GM12878 (cell line): ENCODE measurements at regions of chr17 and their contacts with region 1.

Region 1: GRCh38 chr17:62321451-62321850 is 58.9 kb upstream of the EFCAB3 start:
- DNase-seq: no peak
- ATAC-seq: no peak
- H3K4me3 ChIP-seq: no peak overlapping the region
- H3K27ac ChIP-seq: no peak overlapping the region
- H3K4me1 ChIP-seq: no peaks in the 10 kb centered on the region
- H3K27me3 ChIP-seq: no peaks in the 10 kb centered on the region
- CTCF ChIP-seq: no peak
- EP300 ChIP-seq: no peak
- POLR2A ChIP-seq: no peak
- RAD21 ChIP-seq: no peak

Region 2: GRCh38 chr17:62300697-62301096 is 20.8 kb before region 1 on chr17:
- CTCF ChIA-PET with region 1: no interaction called
- POLR2A ChIA-PET with region 1: no interaction called
- RAD21 ChIA-PET with region 1: no interaction called
- SMC1A ChIA-PET with region 1: no interaction called
- in situ Hi-C with region 1: no loop called
- intact Hi-C with region 1: no loop called
- DNase-seq: no peak
- ATAC-seq: no peak
- H3K4me3 ChIP-seq: no peak overlapping the region
- H3K27ac ChIP-seq: no peak overlapping the region
- H3K4me1 ChIP-seq: no peaks in the 10 kb centered on the region
- H3K27me3 ChIP-seq: no peaks in the 10 kb centered on the region
- CTCF ChIP-seq: no peak
- EP300 ChIP-seq: no peak
- POLR2A ChIP-seq: no peak
- RAD21 ChIP-seq: no peak

Region 3: DNA sequence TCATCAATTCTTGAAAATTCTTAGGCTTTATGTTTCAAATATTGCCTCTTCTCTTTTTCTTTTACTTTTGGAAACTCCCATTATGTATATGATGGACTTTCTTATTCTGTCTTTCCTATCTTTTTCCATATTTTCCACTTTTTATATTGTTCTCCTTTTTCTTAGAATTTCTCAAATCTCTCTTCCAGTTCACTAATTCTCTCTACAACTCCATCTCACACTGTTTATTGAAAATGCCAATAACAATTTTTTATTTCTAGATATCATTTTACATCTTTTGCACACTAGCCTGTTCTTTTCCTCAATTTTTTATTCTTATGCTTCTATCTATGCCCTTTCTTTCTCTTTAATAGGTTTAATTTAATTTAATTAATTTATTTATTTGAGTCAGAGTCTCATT is 15.1 kb after region 1 on chr17:
- CTCF ChIA-PET with region 1: no interaction called
- POLR2A ChIA-PET with region 1: no interaction called
- RAD21 ChIA-PET with region 1: no interaction called
- SMC1A ChIA-PET with region 1: no interaction called
- in situ Hi-C with region 1: no loop called
- intact Hi-C with region 1: loop called (anchors 1 kb)
- DNase-seq: no peak
- ATAC-seq: no peak
- H3K4me3 ChIP-seq: no peak overlapping the region
- H3K27ac ChIP-seq: no peak overlapping the region
- H3K4me1 ChIP-seq: no peaks in the 10 kb centered on the region
- H3K27me3 ChIP-seq: no peaks in the 10 kb centered on the region
- CTCF ChIP-seq: no peak
- EP300 ChIP-seq: no peak
- POLR2A ChIP-seq: no peak
- RAD21 ChIP-seq: no peak

Region 4: DNA sequence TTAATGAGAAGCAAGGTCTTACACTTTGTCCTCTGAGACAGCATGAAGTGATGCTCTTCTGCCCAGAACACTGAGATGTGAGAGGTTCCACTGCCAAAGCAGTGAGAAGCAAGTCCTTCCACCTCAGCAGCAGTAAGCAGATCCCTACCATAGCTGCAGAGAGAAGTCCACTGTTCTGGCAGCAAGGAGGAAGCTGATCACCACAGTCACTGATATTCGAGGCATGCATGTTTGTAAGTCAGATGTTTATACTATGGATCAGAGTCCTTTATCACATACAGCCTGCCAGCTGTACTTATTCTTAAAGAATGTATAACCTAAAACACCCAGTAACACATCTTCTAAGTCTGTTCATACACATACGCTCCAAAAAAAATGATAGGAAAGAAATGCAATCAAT is 84.0 kb after region 1 on chr17:
- CTCF ChIA-PET with region 1: no interaction called
- POLR2A ChIA-PET with region 1: no interaction called
- RAD21 ChIA-PET with region 1: no interaction called
- SMC1A ChIA-PET with region 1: no interaction called
- in situ Hi-C with region 1: no loop called
- intact Hi-C with region 1: no loop called
- DNase-seq: no peak
- ATAC-seq: no peak
- H3K4me3 ChIP-seq: no peak overlapping the region
- H3K27ac ChIP-seq: no peak overlapping the region
- H3K4me1 ChIP-seq: no peaks in the 10 kb centered on the region
- H3K27me3 ChIP-seq: no peaks in the 10 kb centered on the region; a peak in 1 of 4 replicates
- CTCF ChIP-seq: no peak
- EP300 ChIP-seq: no peak
- POLR2A ChIP-seq: no peak
- RAD21 ChIP-seq: no peak